Heart left ventricle (tissue), 16 donors: ENCODE measurements at regions of chr4 and their contacts with region 1.

Region 1: DNA sequence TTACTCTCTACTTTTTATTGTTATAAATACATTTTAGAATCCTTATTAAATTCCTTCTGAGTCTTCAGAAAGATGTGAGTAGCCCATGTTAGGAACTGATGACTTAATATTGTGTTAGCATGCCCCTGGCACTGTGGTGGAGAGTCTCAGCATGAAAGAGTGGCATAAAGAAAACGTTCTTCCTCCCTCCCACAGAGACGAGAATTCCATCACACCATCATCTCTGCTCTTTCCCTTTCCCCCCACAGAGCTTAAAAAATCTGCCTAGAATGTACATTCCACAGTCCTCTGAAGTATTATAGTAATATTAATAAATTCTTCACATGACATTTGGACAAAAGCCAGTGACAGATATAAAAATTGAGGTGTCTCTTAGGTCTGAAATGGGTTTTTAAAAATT is 117.8 kb upstream of the DKK2 start:
- DNase-seq: no peak
- ATAC-seq: no peak
- H3K4me3 ChIP-seq: no peak overlapping the region
- H3K27ac ChIP-seq: no peak overlapping the region
- H3K4me1 ChIP-seq: no peaks in the 10 kb centered on the region
- H3K27me3 ChIP-seq: peaks cover 0 to 4% (median 0%) of the 10 kb centered on the region in 9 donors
- CTCF ChIP-seq: no peak
- POLR2A ChIP-seq: no peak

Region 2: GRCh38 chr4:106717091-106717490 is 436.9 kb before region 1 on chr4:
- intact Hi-C with region 1: no loop called
- DNase-seq: no peak
- ATAC-seq: no peak
- H3K4me3 ChIP-seq: no peak overlapping the region
- H3K27ac ChIP-seq: no peak overlapping the region
- H3K4me1 ChIP-seq: no peaks in the 10 kb centered on the region
- H3K27me3 ChIP-seq: no peaks in the 10 kb centered on the region
- CTCF ChIP-seq: no peak
- POLR2A ChIP-seq: no peak

Region 3: DNA sequence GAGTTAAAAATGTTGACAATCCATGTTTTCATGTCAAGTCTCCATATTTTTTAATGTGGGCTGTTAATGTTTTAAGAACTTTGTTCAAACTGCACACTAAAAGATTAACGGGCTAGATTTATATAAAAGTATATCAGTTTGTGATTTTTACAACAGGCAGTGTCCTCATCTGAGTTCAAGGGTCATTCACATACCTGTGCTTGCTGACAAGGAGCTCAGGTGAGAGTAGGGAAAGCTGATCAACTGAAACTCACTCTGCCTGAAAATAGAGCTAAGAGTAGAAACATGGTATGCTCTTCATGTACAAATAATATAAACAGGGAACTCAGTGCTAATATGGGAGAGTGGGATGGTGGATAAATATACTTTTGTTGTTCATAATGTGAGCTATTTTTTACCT is 15.5 kb before region 1 on chr4:
- intact Hi-C with region 1: loop called in 2 of 10 experiments (anchors 1 to 2 kb)
- DNase-seq: no peak
- ATAC-seq: no peak
- H3K4me3 ChIP-seq: no peak overlapping the region
- H3K27ac ChIP-seq: no peak overlapping the region
- H3K4me1 ChIP-seq: no peaks in the 10 kb centered on the region
- H3K27me3 ChIP-seq: no peaks in the 10 kb centered on the region
- CTCF ChIP-seq: no peak
- POLR2A ChIP-seq: no peak

Region 4: DNA sequence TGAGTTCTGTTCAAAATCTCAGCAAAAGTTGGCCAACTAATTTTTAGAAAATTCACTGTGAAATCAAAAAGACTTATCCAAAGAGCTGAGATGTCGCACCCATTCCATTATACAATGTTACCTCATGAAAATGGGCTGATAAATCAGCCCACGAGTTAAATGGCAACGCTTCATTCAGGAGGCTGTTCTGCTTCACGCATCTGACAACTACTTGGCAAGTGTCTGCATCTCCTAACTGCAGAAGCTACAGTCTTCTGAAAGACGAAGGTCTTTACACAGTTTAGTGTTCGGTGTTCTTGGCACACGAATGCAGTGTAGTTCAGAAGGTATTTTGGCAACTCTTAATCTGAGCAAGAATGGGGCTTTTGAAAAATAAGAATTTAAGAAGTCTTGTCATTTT is 48.8 kb after region 1 on chr4:
- intact Hi-C with region 1: no loop called
- DNase-seq: no peak
- ATAC-seq: no peak
- H3K4me3 ChIP-seq: no peak overlapping the region
- H3K27ac ChIP-seq: peak overlapping the region in 1 of 12 donors; percentile 7
- H3K4me1 ChIP-seq: no peaks in the 10 kb centered on the region
- H3K27me3 ChIP-seq: no peaks in the 10 kb centered on the region
- CTCF ChIP-seq: no peak
- POLR2A ChIP-seq: no peak

Region 5: GRCh38 chr4:107312366-107312765 is 158.4 kb after region 1 on chr4:
- intact Hi-C with region 1: no loop called
- DNase-seq: no peak
- ATAC-seq: no peak
- H3K4me3 ChIP-seq: no peak overlapping the region
- H3K27ac ChIP-seq: no peak overlapping the region
- H3K4me1 ChIP-seq: no peaks in the 10 kb centered on the region
- H3K27me3 ChIP-seq: no peaks in the 10 kb centered on the region
- CTCF ChIP-seq: no peak
- POLR2A ChIP-seq: no peak